ENCODE measurements at regions of chr20 and their contacts with region 1.

Region 1: DNA sequence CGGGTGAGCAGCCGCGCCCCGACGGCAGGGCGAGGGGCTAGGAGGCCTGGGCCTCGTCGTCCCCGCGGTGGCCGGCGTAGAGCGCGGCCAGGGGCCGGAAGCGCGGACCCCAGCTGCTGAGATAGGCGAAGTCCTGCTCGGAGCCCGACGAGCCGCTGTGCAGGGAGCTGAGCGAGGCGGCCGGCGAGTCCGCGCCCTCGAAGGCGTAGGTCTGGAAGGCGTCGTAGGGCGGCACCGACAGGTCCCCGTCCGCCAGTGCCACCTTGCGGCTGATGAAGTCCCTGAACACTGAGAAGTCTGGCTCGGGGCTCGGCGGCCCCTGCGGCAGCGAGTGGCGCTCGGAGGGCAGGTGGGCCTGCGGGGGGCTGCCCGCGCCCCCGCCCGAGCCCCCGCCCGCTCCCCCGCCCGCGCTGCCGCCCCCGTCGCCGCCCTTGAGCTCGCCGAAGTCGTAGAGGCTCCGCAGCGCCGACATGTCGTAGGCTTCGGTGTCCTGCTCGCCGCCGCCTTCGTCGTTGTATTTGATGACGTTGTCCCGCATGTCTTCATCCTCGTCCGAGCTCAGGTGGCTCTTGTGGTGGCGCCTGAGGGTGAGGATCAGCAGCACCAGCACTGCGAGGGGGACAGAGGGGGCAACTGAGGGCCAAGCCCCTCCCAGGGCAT is 56.5 kb downstream of the CD40 start:
- DNase-seq: no peak
- H3K4me3 ChIP-seq: peak overlapping the region in 1 of 2 donors; percentile 22
- H3K27ac ChIP-seq: no peak overlapping the region
- H3K4me1 ChIP-seq: no peaks in the 10 kb centered on the region
- H3K27me3 ChIP-seq: no peaks in the 10 kb centered on the region
- CTCF ChIP-seq: peak; percentile 14 to 49 (median 28)
- POLR2A ChIP-seq: no peak

Region 2: DNA sequence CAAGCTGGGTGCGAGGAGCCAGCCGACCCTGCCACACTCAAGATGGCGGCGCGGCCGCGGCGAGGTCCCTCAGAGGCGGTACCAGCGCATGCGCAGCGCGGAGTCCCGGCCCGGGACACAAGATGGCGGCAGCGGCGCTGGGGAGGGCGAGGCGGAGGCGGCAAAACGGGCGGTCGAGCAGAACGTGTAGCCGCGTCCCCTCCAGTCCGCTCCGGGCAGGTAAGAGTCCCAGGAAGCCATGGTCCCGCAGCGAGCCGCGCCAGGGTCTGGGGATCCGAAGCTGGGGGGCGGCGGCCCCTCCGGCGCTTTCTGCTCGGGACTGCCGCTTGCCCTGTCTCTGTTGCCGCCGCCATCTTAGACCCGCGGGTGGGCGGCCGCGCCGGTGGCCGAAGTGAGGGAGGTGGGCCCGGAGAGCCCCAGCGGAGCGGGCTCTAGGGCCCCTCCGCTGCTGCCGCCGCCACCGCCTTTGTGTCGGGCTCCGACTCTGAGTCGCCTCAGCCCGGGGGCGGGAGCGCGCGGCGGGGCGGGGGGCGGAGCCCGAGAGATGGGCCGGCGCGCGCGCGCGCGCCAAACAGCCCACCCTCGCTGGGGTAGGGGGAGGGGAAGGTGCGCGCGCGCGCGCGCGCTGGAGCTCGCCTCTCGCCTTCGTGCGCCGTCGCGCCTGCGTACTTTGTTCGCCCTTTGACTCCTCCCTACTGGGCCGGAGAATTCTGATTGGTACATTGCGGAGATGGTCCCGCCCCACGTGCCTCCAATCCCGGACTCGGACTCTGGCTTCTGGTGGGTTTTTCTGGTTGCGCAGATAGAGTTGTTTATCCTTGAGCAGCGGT is 239.8 kb before region 1 on chr20 and contains the start of gene PCIF1:
- intact Hi-C with region 1: no loop called
- DNase-seq: peak in 1 of 2 donors; percentile 99
- H3K4me3 ChIP-seq: peak within 1 kb of the TSS; percentile 74 to 94
- H3K27ac ChIP-seq: peak within 1 kb of the TSS; percentile 100
- H3K4me1 ChIP-seq: peaks cover 30% of the 10 kb centered on the region
- H3K27me3 ChIP-seq: no peaks in the 10 kb centered on the region
- CTCF ChIP-seq: no peak
- POLR2A ChIP-seq: peak; percentile 76 to 82
- total RNA-seq, gene PCIF1: 36.6 TPM

Region 3: GRCh38 chr20:46022411-46023147 is 152.0 kb before region 1 on chr20:
- intact Hi-C with region 1: loop called (anchors 10 kb)
- DNase-seq: no peak
- H3K4me3 ChIP-seq: peak overlapping the region in 1 of 2 donors; percentile 30
- H3K27ac ChIP-seq: no peak overlapping the region
- H3K4me1 ChIP-seq: peaks cover 19% of the 10 kb centered on the region
- H3K27me3 ChIP-seq: no peaks in the 10 kb centered on the region
- CTCF ChIP-seq: peak; percentile 42 to 87 (median 51)
- POLR2A ChIP-seq: no peak

Region 4: DNA sequence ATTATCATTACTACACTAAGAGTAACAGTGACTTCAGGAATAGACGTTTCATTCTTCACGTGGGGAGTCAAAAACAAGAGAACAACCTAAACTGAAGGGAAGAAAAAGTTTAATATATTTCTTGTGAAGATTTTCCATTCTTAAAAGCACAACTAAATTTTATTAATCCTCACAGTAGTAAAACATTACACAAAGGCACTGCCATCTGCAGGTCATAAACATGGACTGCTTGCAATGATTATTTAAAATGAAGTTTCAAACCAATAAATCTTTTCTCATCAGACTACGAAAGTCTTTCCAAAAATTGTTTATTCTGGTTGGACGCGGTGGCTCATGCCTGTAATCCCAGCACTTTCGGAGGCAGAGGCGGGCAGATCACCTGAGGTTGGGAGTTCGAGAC is 87.4 kb before region 1 on chr20:
- intact Hi-C with region 1: no loop called
- DNase-seq: no peak
- H3K4me3 ChIP-seq: peak overlapping the region in 1 of 2 donors; percentile 19
- H3K27ac ChIP-seq: no peak overlapping the region
- H3K4me1 ChIP-seq: peaks cover 76% of the 10 kb centered on the region
- H3K27me3 ChIP-seq: no peaks in the 10 kb centered on the region
- CTCF ChIP-seq: no peak
- POLR2A ChIP-seq: no peak

Measured in vagina (tissue), 2 donors.